Breast epithelium (tissue), 4 donors: ENCODE measurements at regions of chrX and their contacts with region 1.

Region 1: DNA sequence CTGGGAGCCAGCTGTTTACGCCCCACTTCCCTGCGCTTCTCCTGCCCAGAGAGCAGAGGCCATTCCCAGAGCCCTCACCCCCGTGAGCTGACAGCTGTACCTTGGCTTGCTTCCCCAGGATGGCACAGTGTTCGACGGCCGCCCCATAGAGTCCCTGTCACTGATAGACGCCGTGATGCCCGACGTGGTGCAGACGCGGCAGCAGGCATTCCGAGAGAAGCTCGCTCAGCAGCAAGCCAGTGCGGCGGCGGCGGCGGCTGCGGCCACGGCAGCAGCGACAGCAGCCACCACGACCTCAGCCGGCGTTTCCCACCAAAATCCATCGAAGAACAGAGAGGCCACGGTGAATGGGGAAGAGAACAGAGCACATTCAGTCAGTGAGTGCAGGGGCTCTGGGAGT is 77.7 kb downstream of the GPR143 start:
- DNase-seq: no peak
- H3K4me3 ChIP-seq: no peak overlapping the region
- H3K27ac ChIP-seq: no peak overlapping the region
- H3K4me1 ChIP-seq: no peaks in the 10 kb centered on the region
- H3K27me3 ChIP-seq: peaks cover 0 to 9% of the 10 kb centered on the region in 2 donors
- CTCF ChIP-seq: no peak
- POLR2A ChIP-seq: no peak

Region 2: DNA sequence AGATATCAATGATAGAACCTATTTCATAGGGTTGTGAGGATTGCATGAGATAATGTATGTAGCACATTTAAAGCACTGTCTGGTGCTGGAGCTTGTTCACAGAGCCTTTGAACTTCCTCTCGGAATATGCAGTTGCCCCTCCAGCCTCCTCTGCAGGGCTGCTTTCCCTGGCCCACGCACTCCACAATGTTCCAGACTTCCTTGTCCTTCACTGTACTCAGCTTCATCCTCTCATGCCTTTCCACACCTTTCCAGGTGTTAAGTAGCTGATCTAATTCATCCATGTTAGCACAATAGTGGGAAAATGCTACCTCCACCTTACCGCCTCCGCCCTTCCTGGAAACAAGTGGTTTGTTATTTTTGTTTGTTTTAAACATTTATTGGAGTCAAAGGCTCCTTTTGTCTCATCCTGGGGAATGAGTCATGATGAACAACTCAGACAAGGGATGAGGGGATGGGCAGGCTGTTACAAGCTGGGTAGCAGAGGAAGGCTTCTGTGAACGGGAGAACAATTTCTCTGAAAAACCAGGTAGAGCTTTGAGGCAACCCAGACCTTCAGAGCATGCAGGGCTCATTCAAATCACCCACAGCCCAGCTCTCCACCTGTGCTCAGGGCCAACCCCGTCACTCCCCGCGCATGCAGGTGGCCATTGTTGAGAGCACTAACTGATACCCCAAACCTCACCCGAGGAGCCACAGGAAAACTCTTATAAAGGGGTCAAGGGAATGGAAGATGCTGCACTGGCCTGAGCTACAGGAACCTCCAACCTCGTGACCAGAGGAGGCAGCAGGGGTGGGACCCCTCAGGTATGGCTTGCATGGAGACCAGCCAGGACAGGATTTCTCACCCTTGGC is 308.0 kb before region 1 on chrX:
- intact Hi-C with region 1: loop called (anchors 5 kb)
- DNase-seq: no peak
- H3K4me3 ChIP-seq: no peak overlapping the region
- H3K27ac ChIP-seq: no peak overlapping the region
- H3K4me1 ChIP-seq: no peaks in the 10 kb centered on the region
- H3K27me3 ChIP-seq: peaks cover 0 to 31% of the 10 kb centered on the region in 2 donors
- CTCF ChIP-seq: no peak
- POLR2A ChIP-seq: no peak

Region 3: DNA sequence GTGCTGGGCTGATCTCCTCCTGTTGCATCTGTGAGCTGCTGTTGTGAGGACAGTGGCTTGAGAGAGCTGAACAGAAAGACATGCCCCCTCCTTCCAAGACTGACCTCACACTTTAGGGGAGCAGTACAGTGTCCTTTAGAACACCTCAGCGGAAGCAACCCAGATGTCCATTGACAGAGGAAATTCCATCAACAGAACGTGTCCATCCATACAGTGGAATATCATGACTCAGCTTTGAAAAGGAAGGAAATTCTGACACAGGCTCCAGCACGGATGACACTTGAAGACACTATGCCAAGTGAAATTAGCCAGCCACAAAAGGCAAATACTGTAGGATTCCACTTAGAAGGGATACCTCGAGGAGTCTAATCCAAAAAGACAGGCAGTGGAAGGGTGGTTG is 25.8 kb before region 1 on chrX:
- intact Hi-C with region 1: no loop called
- DNase-seq: no peak
- H3K4me3 ChIP-seq: no peak overlapping the region
- H3K27ac ChIP-seq: no peak overlapping the region
- H3K4me1 ChIP-seq: no peaks in the 10 kb centered on the region
- H3K27me3 ChIP-seq: peaks cover 0 to 3% of the 10 kb centered on the region in 2 donors
- CTCF ChIP-seq: no peak
- POLR2A ChIP-seq: no peak